ENCODE measurements at regions of chr12 and their contacts with region 1.

Region 1: GRCh38 chr12:57238854-57239554 is 9.5 kb downstream of the SHMT2 start:
- DNase-seq: peak; percentile 73 to 92 (median 86)
- ATAC-seq: peak; percentile 65
- H3K4me3 ChIP-seq: peak overlapping the region; percentile 64 to 78
- H3K4me3 Mint-ChIP-seq: peak overlapping the region; percentile 93
- H3K27ac ChIP-seq: no peak overlapping the region
- H3K27ac Mint-ChIP-seq: no peak overlapping the region
- H3K4me1 ChIP-seq: peaks cover 79% of the 10 kb centered on the region
- H3K4me1 Mint-ChIP-seq: peaks cover 64% of the 10 kb centered on the region
- H3K27me3 ChIP-seq: peaks cover 48 to 72% of the 10 kb centered on the region in 2 experiments
- H3K27me3 Mint-ChIP-seq: peaks cover 56% of the 10 kb centered on the region
- CTCF ChIP-seq: peak; percentile 100

Region 2: DNA sequence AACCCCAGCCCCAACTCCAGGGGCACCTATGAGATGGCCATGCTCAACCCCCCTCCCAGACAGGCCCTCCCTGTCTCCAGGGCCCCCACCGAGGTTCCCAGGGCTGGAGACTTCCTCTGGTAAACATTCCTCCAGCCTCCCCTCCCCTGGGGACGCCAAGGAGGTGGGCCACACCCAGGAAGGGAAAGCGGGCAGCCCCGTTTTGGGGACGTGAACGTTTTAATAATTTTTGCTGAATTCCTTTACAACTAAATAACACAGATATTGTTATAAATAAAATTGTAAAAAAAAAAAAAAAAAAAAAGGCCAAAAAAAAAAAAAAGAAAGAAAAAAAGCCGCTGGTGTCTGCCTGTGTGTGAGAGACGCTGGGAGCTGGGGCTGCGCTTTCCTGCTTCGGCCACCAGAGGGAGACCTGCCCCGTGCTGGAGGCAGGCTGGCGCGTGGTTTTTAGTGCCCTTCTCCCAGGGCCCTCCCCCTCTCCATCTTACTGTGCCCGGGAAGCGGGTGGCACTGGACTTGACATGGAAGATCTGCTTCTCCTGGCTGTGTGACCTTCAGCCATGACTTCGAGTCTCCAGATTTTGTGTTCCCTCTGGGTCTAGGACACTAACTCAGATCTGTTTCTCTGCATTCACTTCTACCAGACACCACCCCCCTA is 25.8 kb before region 1 on chr12:
- CTCF ChIA-PET with region 1: interaction called, 526 read pairs
- POLR2A ChIA-PET with region 1: interaction called, 22 read pairs
- intact Hi-C with region 1: loop called (anchors 1 kb)
- DNase-seq: peak; percentile 70 to 90 (median 84)
- ATAC-seq: peak; percentile 66
- H3K4me3 ChIP-seq: no peak overlapping the region
- H3K4me3 Mint-ChIP-seq: peak overlapping the region; percentile 8
- H3K27ac ChIP-seq: no peak overlapping the region
- H3K27ac Mint-ChIP-seq: no peak overlapping the region
- H3K4me1 ChIP-seq: peaks cover 43% of the 10 kb centered on the region
- H3K4me1 Mint-ChIP-seq: peaks cover 34% of the 10 kb centered on the region
- H3K27me3 ChIP-seq: peaks cover 37 to 42% of the 10 kb centered on the region in 2 experiments
- H3K27me3 Mint-ChIP-seq: peaks cover 39% of the 10 kb centered on the region
- CTCF ChIP-seq: peak; percentile 97

Region 3: GRCh38 chr12:57250541-57251324 is 11.7 kb after region 1 on chr12 and contains the start of gene STAC3:
- CTCF ChIA-PET with region 1: interaction called, 302 read pairs
- POLR2A ChIA-PET with region 1: no interaction called
- intact Hi-C with region 1: no loop called
- DNase-seq: no peak
- ATAC-seq: no peak
- H3K4me3 ChIP-seq: no peak within 1 kb of the TSS
- H3K4me3 Mint-ChIP-seq: no peak within 1 kb of the TSS
- H3K27ac ChIP-seq: no peak within 1 kb of the TSS
- H3K27ac Mint-ChIP-seq: no peak within 1 kb of the TSS
- H3K4me1 ChIP-seq: no peaks in the 10 kb centered on the region
- H3K4me1 Mint-ChIP-seq: peaks cover 6% of the 10 kb centered on the region
- H3K27me3 ChIP-seq: no peaks in the 10 kb centered on the region
- H3K27me3 Mint-ChIP-seq: peaks cover 3% of the 10 kb centered on the region
- CTCF ChIP-seq: no peak
- total RNA-seq, gene STAC3: 0.54 to 1.5 TPM

Region 4: DNA sequence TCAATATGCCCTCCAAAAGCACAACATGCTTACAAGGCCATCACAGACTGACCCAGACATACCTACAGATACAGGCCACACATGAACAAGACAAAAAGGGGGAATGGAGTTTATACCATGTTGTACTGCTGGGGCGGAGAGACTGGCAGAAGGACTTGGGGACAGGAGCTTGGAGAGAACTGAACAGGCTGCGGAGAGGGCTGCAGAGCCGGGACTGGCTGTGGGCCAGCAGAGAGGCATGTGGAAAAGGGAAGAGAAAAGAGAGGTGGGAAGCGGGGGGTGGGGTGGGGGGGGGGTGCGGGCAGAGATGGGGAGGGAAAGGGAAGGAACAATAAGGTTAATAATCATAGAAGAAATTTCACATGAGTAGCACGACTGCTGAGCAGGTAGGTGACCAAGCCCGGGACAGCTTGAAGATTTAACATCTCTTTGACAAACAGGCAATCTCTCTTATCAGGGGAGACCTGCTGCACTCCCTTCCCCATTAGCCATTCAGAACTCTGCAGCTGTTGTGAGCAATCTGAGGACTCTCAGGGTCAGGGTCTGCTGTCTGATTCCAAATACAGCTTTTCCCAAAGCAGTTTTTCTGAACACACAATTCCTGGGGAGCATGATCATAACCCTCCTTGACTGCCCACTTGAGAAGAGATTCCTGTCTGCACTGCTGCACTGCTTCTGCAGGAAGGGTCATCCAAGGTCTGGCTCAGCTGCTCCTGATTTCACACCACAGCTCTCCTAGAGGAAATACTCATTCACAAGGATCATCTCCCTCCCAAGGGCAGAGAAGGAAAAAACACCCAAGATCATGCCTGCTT is 33.5 kb after region 1 on chr12:
- CTCF ChIA-PET with region 1: interaction called, 16 read pairs
- POLR2A ChIA-PET with region 1: no interaction called
- intact Hi-C with region 1: no loop called
- DNase-seq: no peak
- ATAC-seq: no peak
- H3K4me3 ChIP-seq: no peak overlapping the region
- H3K4me3 Mint-ChIP-seq: no peak overlapping the region
- H3K27ac ChIP-seq: no peak overlapping the region
- H3K27ac Mint-ChIP-seq: no peak overlapping the region
- H3K4me1 ChIP-seq: no peaks in the 10 kb centered on the region
- H3K4me1 Mint-ChIP-seq: peaks cover 2% of the 10 kb centered on the region
- H3K27me3 ChIP-seq: no peaks in the 10 kb centered on the region
- H3K27me3 Mint-ChIP-seq: no peaks in the 10 kb centered on the region
- CTCF ChIP-seq: no peak